AG04450 (cell line): ENCODE measurements at regions of chr7 and their contacts with region 1.

Region 1: DNA sequence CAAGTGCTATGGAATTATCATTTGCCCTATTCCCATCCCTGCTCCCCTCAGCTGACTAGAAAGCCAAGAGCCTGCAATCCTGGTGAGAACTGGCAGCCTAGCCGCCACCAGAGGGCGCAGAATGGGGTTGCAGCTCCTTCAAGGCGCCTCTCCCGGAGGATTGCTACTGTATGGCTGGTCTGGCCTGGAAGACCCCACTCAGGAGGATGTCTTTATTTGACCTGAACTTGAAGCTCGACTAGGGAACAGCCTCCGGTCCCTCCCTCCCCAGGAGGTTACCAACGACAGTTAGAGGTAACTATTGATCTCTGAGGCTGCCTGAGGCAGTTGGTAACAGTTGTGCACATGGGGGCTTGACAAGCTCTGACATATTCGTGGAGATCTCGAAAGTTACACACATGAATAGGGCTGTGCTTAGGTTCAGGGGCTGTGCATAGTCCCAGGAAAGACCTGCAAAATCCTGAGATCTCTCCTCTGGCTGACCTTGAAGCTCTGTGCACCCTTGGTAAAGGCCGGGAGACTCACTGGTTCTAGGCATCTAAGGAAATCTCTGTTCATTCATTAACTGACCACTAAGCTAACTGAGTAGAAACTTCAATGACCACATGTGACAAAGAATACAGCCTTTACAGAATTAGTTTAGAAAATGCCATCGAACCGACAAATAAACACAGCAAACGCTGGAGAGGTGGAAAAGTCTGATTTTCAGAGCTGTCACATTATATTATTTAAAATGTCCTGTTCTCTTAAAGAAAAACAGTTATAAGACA is 65.7 kb downstream of the TSPAN12 start:
- DNase-seq: peak; percentile 29
- H3K4me3 ChIP-seq: no peak overlapping the region
- H3K27ac ChIP-seq: no peak overlapping the region
- H3K27me3 ChIP-seq: no peaks in the 10 kb centered on the region
- CTCF ChIP-seq: peak; percentile 95

Region 2: GRCh38 chr7:120774481-120774880 is 17.8 kb before region 1 on chr7:
- CTCF ChIA-PET with region 1: interaction called, 28 read pairs
- POLR2A ChIA-PET with region 1: no interaction called
- DNase-seq: no peak
- H3K4me3 ChIP-seq: no peak overlapping the region
- H3K27ac ChIP-seq: no peak overlapping the region
- H3K27me3 ChIP-seq: peaks cover 3% of the 10 kb centered on the region
- CTCF ChIP-seq: no peak

Region 3: DNA sequence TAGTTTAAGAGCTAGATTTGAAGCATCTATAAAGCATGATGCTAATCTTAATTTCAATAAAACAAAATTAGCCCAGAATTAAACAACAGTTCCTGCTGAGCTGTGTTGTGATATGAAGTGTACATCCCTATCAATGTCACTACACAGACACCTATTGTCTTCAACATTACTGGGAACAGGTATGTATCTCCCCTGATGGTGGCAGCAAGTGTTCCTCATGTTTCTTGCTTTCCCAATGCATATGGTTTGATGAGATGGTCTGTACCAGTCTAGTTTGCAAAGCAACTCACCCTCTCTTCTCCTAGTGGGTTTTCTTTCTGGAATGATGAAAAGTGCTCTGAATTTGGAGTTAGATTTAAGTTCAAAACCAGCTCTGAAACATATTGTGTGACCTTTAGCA is 27.6 kb after region 1 on chr7:
- CTCF ChIA-PET with region 1: interaction called, 12 read pairs
- POLR2A ChIA-PET with region 1: no interaction called
- DNase-seq: no peak
- H3K4me3 ChIP-seq: no peak overlapping the region
- H3K27ac ChIP-seq: no peak overlapping the region
- H3K27me3 ChIP-seq: no peaks in the 10 kb centered on the region
- CTCF ChIP-seq: no peak

Region 4: GRCh38 chr7:120857588-120858573 is 65.6 kb after region 1 on chr7 and contains the start of gene TSPAN12:
- CTCF ChIA-PET with region 1: interaction called, 19 read pairs
- POLR2A ChIA-PET with region 1: no interaction called
- DNase-seq: no peak
- H3K4me3 ChIP-seq: peak within 1 kb of the TSS; percentile 71
- H3K27ac ChIP-seq: no peak within 1 kb of the TSS
- H3K27me3 ChIP-seq: no peaks in the 10 kb centered on the region
- CTCF ChIP-seq: peak; percentile 62
- polyA plus RNA-seq, gene TSPAN12: 3.4 and 6.9 TPM in 2 replicates

Region 5: DNA sequence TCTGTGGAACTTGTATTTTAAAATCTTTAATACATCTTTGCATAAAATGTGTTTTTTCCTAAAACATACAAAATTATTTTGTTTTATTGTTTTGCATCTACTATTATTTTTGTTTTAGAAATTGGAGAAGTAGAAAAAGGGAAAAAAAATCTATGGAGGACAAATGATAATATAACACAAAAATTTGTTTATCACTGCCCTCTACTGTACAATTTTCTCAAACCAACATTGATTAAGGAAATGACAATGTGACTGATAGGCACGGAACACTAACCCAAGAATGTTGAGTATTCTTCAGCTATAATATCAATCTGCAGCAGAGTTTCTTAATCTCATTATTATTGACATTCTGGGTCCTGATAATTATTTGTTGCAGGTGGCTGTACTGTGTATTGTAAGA is 148.8 kb after region 1 on chr7:
- CTCF ChIA-PET with region 1: interaction called, 20 read pairs
- POLR2A ChIA-PET with region 1: no interaction called
- DNase-seq: no peak
- H3K4me3 ChIP-seq: no peak overlapping the region
- H3K27ac ChIP-seq: no peak overlapping the region
- H3K27me3 ChIP-seq: no peaks in the 10 kb centered on the region
- CTCF ChIP-seq: peak; percentile 22; the same call in 1 of the 2 replicates

Region 6: GRCh38 chr7:120987683-120988590 is 195.7 kb after region 1 on chr7:
- CTCF ChIA-PET with region 1: interaction called, 10 read pairs
- POLR2A ChIA-PET with region 1: no interaction called
- DNase-seq: peak; percentile 90
- H3K4me3 ChIP-seq: peak overlapping the region; percentile 76
- H3K27ac ChIP-seq: peak overlapping the region; percentile 40
- H3K27me3 ChIP-seq: no peaks in the 10 kb centered on the region
- CTCF ChIP-seq: peak; percentile 99